CD4-positive, alpha-beta T cell (primary cell): ENCODE measurements at regions of chr22 and their contacts with region 1.

Region 1: GRCh38 chr22:26756675-26757293 is 99.4 kb downstream of the MIAT start:
- DNase-seq: peak in 10 of 14 experiments; percentile 5 to 67 (median 30)
- ATAC-seq: peak; percentile 54
- H3K4me3 ChIP-seq: no peak overlapping the region
- H3K4me3 Mint-ChIP-seq: no peak overlapping the region
- H3K27ac ChIP-seq: no peak overlapping the region
- H3K27ac Mint-ChIP-seq: no peak overlapping the region
- H3K4me1 ChIP-seq: no peaks in the 10 kb centered on the region
- H3K4me1 Mint-ChIP-seq: peaks cover 18% of the 10 kb centered on the region
- H3K27me3 ChIP-seq: no peaks in the 10 kb centered on the region
- H3K27me3 Mint-ChIP-seq: no peaks in the 10 kb centered on the region
- CTCF ChIP-seq: peak; percentile 60

Region 2: DNA sequence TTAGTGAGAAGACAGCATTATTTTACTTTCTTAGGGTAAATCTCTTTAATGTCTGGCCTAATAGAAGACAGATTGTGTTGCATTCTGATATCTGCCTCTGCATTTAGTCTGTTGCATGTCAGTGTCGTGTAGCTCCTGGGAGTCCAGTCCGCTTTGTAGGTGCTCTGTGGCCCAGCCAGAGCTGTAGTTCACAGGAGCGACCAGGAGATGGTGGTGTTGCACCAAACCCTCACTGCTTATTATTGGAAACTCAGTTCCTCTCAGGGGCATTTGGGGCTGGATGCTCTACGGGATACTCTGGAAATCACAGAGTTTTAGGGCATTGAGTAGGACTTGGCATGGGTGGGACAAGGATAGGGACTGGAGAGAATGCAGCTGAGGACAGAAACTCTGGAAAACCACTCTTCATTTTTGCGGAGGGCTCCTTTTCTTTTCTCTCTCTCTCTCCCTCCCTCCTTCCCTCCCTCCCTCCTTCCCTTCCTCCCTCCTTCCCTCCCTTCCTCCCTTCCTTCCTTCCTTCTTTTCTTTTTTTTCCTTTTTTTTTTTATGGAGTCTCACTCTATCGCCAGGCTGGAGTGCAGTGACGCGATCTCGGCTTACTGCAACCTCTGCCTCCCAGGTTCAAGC is 77.7 kb before region 1 on chr22:
- CTCF ChIA-PET with region 1: no interaction called
- POLR2A ChIA-PET with region 1: no interaction called
- intact Hi-C with region 1: loop called in 1 of 2 experiments (anchors 2 kb)
- DNase-seq: peak; percentile 43 to 82 (median 64)
- ATAC-seq: peak; percentile 88
- H3K4me3 ChIP-seq: no peak overlapping the region
- H3K4me3 Mint-ChIP-seq: peak overlapping the region; percentile 86
- H3K27ac ChIP-seq: no peak overlapping the region
- H3K27ac Mint-ChIP-seq: peak overlapping the region; percentile 46
- H3K4me1 ChIP-seq: peaks cover 69% of the 10 kb centered on the region
- H3K4me1 Mint-ChIP-seq: peaks cover 75% of the 10 kb centered on the region
- H3K27me3 ChIP-seq: no peaks in the 10 kb centered on the region
- H3K27me3 Mint-ChIP-seq: no peaks in the 10 kb centered on the region
- CTCF ChIP-seq: peak; percentile 91

Region 3: DNA sequence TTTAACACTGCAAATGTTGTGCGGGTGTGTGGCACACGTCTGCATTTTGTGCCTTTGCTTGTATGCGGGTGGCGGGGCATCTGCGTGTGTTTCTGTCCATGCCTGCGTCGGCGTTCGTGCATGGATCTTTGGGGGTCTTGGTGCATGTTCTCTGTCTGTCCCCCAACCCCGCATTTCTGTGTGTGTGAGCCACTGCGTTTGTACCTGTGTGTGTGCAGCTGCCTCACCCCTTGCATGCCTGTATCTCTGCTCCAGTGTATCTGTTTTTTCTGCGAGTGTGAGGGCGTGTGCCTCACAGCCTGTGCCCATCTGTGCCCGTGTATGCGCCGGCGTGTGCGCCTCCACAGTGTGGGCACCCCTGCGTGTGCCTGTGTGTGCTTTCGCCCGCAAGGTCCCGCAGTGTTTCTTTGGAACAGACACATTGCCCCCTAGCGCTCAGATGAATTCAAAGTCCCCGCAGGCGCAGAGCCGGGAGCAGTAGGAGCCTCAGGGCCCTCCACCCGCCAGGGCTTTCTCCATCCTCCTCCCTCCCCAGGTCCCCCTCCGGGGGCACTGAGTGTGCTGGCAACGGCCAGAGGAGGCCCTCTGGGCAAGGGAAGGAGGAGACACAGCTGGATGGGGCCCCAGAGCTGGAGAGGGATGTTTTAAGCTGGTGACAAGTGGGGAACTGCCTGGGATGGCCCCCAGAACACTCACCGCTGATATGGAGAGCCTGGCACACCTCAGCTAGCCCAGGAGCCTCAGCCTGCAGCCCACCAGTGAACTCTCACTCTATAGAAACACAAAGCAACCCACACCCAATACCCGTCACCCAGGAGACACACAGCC is 1047.9 kb after region 1 on chr22:
- CTCF ChIA-PET with region 1: no interaction called
- POLR2A ChIA-PET with region 1: no interaction called
- intact Hi-C with region 1: loop called in 1 of 2 experiments (anchors 10 kb)
- DNase-seq: peak in 13 of 14 experiments; percentile 27 to 72 (median 44)
- ATAC-seq: peak; percentile 32
- H3K4me3 ChIP-seq: no peak overlapping the region
- H3K4me3 Mint-ChIP-seq: peak overlapping the region; percentile 91
- H3K27ac ChIP-seq: no peak overlapping the region
- H3K27ac Mint-ChIP-seq: no peak overlapping the region
- H3K4me1 ChIP-seq: peaks cover 24% of the 10 kb centered on the region
- H3K4me1 Mint-ChIP-seq: peaks cover 19% of the 10 kb centered on the region
- H3K27me3 ChIP-seq: peaks cover 7% of the 10 kb centered on the region in 2 experiments
- H3K27me3 Mint-ChIP-seq: peaks cover 34% of the 10 kb centered on the region
- CTCF ChIP-seq: peak; percentile 68